MCF 10A (cell line): ENCODE measurements at regions of chr1 and their contacts with region 1.

Region 1: DNA sequence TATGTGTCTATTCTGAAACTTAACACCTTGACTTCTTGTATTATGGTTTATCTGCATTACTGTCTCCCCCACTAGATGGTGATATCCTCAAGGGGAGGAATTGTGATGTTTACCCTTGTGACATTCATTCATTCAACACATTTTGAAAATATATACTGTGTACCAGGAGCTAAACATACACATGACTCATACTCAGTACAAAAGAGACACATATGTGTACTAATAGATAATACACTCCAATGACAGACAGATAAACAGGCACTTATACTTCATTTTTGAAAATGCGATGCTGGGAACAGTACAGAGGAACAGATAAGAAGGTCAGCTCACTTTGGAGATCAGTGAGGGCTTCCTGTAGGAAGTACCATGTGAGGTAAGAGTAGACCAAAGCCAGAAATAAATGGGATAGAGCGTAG is 8.9 kb upstream of the RAB3GAP2 start:
- DNase-seq: peak; percentile 77
- H3K4me3 Mint-ChIP-seq: no peak overlapping the region
- H3K27ac Mint-ChIP-seq: no peak overlapping the region
- H3K4me1 Mint-ChIP-seq: no peaks in the 10 kb centered on the region
- H3K27me3 Mint-ChIP-seq: peaks cover 13% of the 10 kb centered on the region
- CTCF ChIP-seq: peak; percentile 93

Region 2: GRCh38 chr1:220229771-220230170 is 51.4 kb before region 1 on chr1:
- CTCF ChIA-PET with region 1: interaction called, 19 read pairs
- POLR2A ChIA-PET with region 1: no interaction called
- intact Hi-C with region 1: no loop called
- DNase-seq: no peak
- H3K4me3 Mint-ChIP-seq: no peak overlapping the region
- H3K27ac Mint-ChIP-seq: no peak overlapping the region
- H3K4me1 Mint-ChIP-seq: peaks cover 7% of the 10 kb centered on the region
- H3K27me3 Mint-ChIP-seq: no peaks in the 10 kb centered on the region
- CTCF ChIP-seq: no peak

Region 3: DNA sequence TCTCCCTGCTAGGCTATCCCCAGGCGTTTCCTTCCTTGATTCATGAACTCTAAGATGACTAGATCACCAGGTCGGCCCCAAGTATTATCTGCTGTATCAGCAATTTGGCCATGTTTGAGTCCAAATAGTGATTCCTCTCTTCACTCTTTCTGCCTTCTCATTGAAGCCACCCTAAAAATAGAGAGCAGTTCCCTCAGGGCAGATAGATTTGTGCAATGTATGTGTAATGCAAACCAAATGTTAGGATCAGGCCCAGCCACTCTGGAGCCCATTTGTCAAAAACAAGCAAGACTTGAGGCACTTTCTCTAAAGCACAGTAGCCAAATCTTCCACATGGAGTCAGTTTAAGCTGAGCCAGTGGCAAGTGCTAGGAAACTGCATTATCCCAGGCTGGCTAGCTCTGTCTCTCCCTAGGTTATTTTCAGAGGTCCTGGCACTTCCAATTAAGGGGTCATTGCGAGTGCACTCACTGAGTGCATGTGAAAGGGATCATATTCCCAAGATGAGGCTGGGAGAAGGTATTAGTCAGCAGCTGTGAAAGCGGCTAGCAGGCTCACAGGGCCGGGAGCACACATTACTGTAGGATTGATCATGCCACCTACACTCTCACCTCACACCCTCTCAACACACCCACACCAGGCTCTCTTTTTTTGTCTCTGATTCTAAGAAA is 89.0 kb after region 1 on chr1:
- CTCF ChIA-PET with region 1: interaction called, 10 read pairs
- POLR2A ChIA-PET with region 1: no interaction called
- intact Hi-C with region 1: no loop called
- DNase-seq: peak; percentile 98
- H3K4me3 Mint-ChIP-seq: peak overlapping the region; percentile 6
- H3K27ac Mint-ChIP-seq: peak overlapping the region; percentile 65
- H3K4me1 Mint-ChIP-seq: peaks cover 28% of the 10 kb centered on the region
- H3K27me3 Mint-ChIP-seq: no peaks in the 10 kb centered on the region
- CTCF ChIP-seq: no peak

Region 4: DNA sequence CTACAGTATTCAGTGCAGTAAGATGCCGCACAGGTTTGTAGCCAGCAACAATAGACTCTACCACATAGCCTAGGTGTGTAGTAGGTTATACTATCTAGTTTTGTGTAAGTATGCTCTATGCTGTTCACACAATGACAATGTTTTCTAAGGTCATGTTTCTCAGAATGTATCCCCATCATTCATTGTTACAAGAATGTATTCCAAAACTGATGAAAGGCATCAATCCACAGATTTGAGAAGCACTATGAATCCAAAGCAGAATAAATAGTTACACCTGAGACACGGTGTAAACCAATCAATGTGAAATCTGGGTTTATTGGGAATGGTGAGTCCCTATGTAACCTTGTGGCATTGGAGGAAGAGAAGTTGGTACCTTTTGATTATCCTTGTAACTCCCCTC is 192.3 kb after region 1 on chr1:
- CTCF ChIA-PET with region 1: no interaction called
- POLR2A ChIA-PET with region 1: no interaction called
- intact Hi-C with region 1: no loop called
- DNase-seq: no peak
- H3K4me3 Mint-ChIP-seq: no peak overlapping the region
- H3K27ac Mint-ChIP-seq: no peak overlapping the region
- H3K4me1 Mint-ChIP-seq: no peaks in the 10 kb centered on the region
- H3K27me3 Mint-ChIP-seq: no peaks in the 10 kb centered on the region
- CTCF ChIP-seq: no peak

Region 5: DNA sequence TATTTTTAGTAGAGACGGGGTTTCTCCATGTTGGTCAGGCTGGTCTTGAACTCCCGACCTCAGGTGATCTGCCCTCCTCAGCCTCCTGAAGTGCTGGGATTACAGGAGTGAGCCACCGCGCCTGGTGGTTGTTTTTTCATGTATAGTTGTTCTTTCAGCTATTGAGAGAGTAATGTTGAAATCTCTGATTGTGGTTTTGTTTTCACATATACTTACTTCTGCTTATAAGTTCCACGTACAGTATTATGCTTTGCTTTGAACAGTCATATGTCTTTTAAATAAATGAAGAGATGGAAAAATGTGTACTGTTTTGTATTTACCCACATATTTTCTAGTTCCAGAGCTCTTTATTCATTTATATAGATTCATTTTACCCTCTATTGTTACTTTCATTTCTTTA is 291.2 kb after region 1 on chr1:
- CTCF ChIA-PET with region 1: interaction called, 15 read pairs
- POLR2A ChIA-PET with region 1: no interaction called
- intact Hi-C with region 1: no loop called
- DNase-seq: no peak
- H3K4me3 Mint-ChIP-seq: no peak overlapping the region
- H3K27ac Mint-ChIP-seq: no peak overlapping the region
- H3K4me1 Mint-ChIP-seq: peaks cover 7% of the 10 kb centered on the region
- H3K27me3 Mint-ChIP-seq: no peaks in the 10 kb centered on the region
- CTCF ChIP-seq: no peak

Region 6: DNA sequence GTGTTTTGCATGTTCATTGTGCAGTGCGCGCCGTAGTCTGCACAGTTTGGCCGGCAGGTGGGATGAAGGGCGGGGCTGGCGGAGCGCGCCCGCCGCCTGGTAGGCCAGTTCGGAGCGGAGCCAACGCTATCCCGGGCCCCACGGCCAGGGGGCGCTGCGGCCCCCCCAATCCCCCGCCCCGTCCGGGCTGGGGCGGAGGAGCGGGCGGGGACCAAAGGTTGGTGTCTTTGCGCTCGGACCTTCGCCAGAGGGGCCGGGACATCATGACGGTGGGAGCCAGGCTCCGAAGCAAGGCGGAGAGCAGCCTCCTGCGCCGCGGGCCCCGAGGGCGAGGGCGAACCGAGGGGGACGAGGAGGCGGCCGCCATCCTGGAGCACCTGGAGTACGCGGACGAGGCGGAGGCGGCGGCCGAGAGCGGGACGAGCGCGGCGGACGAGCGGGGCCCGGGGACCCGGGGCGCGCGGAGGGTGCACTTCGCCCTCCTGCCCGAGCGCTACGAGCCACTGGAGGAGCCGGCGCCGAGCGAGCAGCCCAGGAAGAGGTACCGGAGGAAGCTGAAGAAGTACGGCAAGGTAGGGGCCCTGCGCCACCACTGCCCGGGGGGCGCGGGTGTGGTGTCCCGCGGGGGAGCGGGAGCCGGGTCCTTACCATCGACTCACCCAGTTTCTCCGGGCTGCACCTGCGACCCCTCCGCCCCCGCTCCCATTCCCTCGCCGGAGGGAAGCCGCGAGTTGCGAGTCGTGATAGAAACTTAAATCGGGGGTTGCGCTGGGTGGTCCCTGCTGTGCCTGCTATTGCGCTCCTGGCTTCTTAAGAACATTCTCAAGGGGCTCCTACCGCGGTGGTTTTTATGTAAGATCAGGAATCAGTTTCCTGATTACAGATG is 409.2 kb after region 1 on chr1 and contains the start of gene C1orf115:
- CTCF ChIA-PET with region 1: interaction called, 22 read pairs
- POLR2A ChIA-PET with region 1: interaction called, 4 read pairs
- intact Hi-C with region 1: no loop called
- DNase-seq: peak; percentile 81
- H3K4me3 Mint-ChIP-seq: peak within 1 kb of the TSS; percentile 83
- H3K27ac Mint-ChIP-seq: no peak within 1 kb of the TSS
- H3K4me1 Mint-ChIP-seq: peaks cover 7% of the 10 kb centered on the region
- H3K27me3 Mint-ChIP-seq: no peaks in the 10 kb centered on the region
- CTCF ChIP-seq: peak; percentile 100
- total RNA-seq, gene C1orf115: 1.6 TPM in 2 replicates

Region 7: DNA sequence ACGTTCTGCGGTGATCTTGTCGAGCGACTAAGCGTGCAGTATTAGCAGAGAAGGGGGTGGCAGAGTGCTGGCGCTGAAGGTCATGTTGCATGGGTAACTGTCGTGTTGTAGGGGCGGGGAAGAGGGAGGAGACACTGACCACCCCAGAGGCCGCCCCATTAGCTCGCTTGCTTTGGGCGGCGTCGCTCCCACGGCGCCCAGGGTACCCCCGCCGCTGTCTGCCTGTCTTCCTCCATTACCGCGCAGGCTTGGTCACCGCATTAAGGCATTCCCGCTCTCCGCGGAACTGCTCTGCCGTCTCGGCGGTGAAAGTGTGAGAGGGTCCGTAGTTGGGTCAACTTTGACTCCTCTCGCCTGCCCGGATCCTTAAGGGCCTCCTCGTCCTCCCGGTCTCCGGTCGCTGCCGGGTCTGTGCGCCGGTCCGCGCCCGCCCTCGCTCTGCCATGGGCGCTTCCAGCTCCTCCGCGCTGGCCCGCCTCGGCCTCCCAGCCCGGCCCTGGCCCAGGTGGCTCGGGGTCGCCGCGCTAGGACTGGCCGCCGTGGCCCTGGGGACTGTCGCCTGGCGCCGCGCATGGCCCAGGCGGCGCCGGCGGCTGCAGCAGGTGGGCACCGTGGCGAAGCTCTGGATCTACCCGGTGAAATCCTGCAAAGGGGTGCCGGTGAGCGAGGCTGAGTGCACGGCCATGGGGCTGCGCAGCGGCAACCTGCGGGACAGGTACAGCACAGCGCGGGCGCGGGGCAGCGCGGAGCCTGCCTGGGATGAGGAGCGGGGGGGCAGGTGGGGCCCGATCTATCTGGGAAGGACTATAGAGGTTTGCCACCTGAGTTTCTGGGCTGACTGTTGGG is 467.1 kb after region 1 on chr1 and contains the start of gene MTARC2:
- CTCF ChIA-PET with region 1: interaction called, 20 read pairs
- POLR2A ChIA-PET with region 1: no interaction called
- intact Hi-C with region 1: no loop called
- DNase-seq: peak; percentile 77
- H3K4me3 Mint-ChIP-seq: peak within 1 kb of the TSS; percentile 71
- H3K27ac Mint-ChIP-seq: no peak within 1 kb of the TSS
- H3K4me1 Mint-ChIP-seq: no peaks in the 10 kb centered on the region
- H3K27me3 Mint-ChIP-seq: no peaks in the 10 kb centered on the region
- CTCF ChIP-seq: no peak
- total RNA-seq, gene MTARC2: 3.6 and 5.2 TPM in 2 replicates

Region 8: GRCh38 chr1:220803401-220804201 is 522.4 kb after region 1 on chr1:
- CTCF ChIA-PET with region 1: interaction called, 26 read pairs
- POLR2A ChIA-PET with region 1: interaction called, 3 read pairs
- intact Hi-C with region 1: loop called (anchors 1 kb)
- DNase-seq: peak; percentile 74
- H3K4me3 Mint-ChIP-seq: no peak overlapping the region
- H3K27ac Mint-ChIP-seq: no peak overlapping the region
- H3K4me1 Mint-ChIP-seq: no peaks in the 10 kb centered on the region
- H3K27me3 Mint-ChIP-seq: no peaks in the 10 kb centered on the region
- CTCF ChIP-seq: peak; percentile 97